Naive thymus-derived CD4-positive, alpha-beta T cell (primary cell): ENCODE measurements at regions of chr11 and their contacts with region 1.

Region 1: GRCh38 chr11:119030329-119031049 is at the start of gene SLC37A4:
- DNase-seq: peak; percentile 96 to 100 (median 98)
- ATAC-seq: peak; percentile 97
- H3K4me3 ChIP-seq: peak within 1 kb of the TSS; percentile 91
- H3K4me3 Mint-ChIP-seq: peak within 1 kb of the TSS; percentile 62 to 93 (median 82)
- H3K27ac ChIP-seq: peak within 1 kb of the TSS; percentile 79
- H3K27ac Mint-ChIP-seq: peak within 1 kb of the TSS; percentile 59 to 93 (median 81)
- H3K4me1 ChIP-seq: peaks cover 0 to 10% of the 10 kb centered on the region in 2 donors
- H3K4me1 Mint-ChIP-seq: peaks cover 12 to 24% (median 17%) of the 10 kb centered on the region in 7 donors
- H3K27me3 ChIP-seq: no peaks in the 10 kb centered on the region
- H3K27me3 Mint-ChIP-seq: no peaks in the 10 kb centered on the region
- total RNA-seq, gene SLC37A4: 7.1 to 20.8 (median 14.6) TPM

Region 2: GRCh38 chr11:118997627-118998387 is 32.7 kb before region 1 on chr11 and contains the start of gene CENATAC:
- CTCF ChIA-PET with region 1: no interaction called
- POLR2A ChIA-PET with region 1: interaction called, 16 read pairs
- intact Hi-C with region 1: loop called (anchors 1 kb)
- DNase-seq: peak; percentile 91 to 98 (median 94)
- ATAC-seq: peak; percentile 98
- H3K4me3 ChIP-seq: peak within 1 kb of the TSS; percentile 91
- H3K4me3 Mint-ChIP-seq: peak within 1 kb of the TSS; percentile 87 to 99 (median 94)
- H3K27ac ChIP-seq: peak within 1 kb of the TSS; percentile 85
- H3K27ac Mint-ChIP-seq: peak within 1 kb of the TSS; percentile 87 to 98 (median 92)
- H3K4me1 ChIP-seq: peaks cover 6 to 16% of the 10 kb centered on the region in 2 donors
- H3K4me1 Mint-ChIP-seq: peaks cover 26 to 45% (median 37%) of the 10 kb centered on the region in 7 donors
- H3K27me3 ChIP-seq: no peaks in the 10 kb centered on the region
- H3K27me3 Mint-ChIP-seq: no peaks in the 10 kb centered on the region
- total RNA-seq, gene CENATAC: 53.5 to 136 (median 109) TPM

Region 3: GRCh38 chr11:119084663-119085436 is 54.4 kb after region 1 on chr11 and contains the start of gene HMBS:
- CTCF ChIA-PET with region 1: no interaction called
- POLR2A ChIA-PET with region 1: interaction called, 3 read pairs
- intact Hi-C with region 1: loop called (anchors 1 to 2 kb)
- DNase-seq: peak; percentile 83 to 93 (median 87)
- ATAC-seq: peak; percentile 97
- H3K4me3 ChIP-seq: peak within 1 kb of the TSS; percentile 81
- H3K4me3 Mint-ChIP-seq: peak within 1 kb of the TSS; percentile 85 to 98 (median 94)
- H3K27ac ChIP-seq: peak within 1 kb of the TSS; percentile 81
- H3K27ac Mint-ChIP-seq: peak within 1 kb of the TSS; percentile 87 to 97 (median 93)
- H3K4me1 ChIP-seq: peaks cover 8 to 9% of the 10 kb centered on the region in 2 donors
- H3K4me1 Mint-ChIP-seq: peaks cover 7 to 39% (median 17%) of the 10 kb centered on the region in 7 donors
- H3K27me3 ChIP-seq: no peaks in the 10 kb centered on the region
- H3K27me3 Mint-ChIP-seq: no peaks in the 10 kb centered on the region
- total RNA-seq, gene HMBS: 6.7 to 25.4 (median 7.7) TPM

Region 4: DNA sequence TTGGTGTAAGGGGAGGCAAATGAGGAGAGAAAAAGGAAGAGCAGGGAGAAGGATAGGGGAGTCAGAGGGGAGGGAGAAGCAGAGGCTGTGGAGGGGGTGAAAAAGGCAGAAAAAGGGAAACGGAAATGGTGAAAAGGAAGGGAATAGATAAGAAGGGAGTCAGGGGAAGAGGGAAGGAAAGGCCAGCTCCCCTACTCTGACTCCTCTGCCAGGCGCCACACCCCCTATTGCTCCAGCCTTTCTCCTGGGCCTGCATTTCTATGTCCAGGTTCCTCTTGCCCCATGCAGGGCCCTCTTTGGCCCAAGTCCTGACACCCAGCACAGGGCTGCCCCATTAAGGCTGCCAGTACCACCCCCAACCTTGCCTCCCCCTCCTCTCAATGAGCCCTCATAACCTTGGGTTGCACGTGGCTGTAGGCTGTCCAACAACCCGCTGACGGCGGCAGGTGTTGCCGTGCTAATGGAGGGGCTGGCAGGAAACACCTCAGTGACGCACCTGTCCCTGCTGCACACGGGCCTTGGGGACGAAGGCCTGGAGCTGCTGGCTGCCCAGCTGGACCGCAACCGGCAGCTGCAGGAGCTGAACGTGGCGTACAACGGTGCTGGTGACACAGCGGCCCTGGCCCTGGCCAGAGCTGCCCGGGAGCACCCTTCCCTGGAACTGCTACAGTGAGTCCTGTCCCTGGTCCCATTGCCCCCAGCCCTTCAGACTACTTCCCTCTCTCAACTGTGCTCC is 151.4 kb after region 1 on chr11:
- CTCF ChIA-PET with region 1: no interaction called
- POLR2A ChIA-PET with region 1: no interaction called
- intact Hi-C with region 1: no loop called
- DNase-seq: no peak
- ATAC-seq: no peak
- H3K4me3 ChIP-seq: no peak overlapping the region
- H3K4me3 Mint-ChIP-seq: no peak overlapping the region
- H3K27ac ChIP-seq: no peak overlapping the region
- H3K27ac Mint-ChIP-seq: peak overlapping the region in 3 of 9 donors; percentile 13 to 70 (median 38)
- H3K4me1 ChIP-seq: peaks cover 0 to 14% of the 10 kb centered on the region in 2 donors
- H3K4me1 Mint-ChIP-seq: peaks cover 9 to 18% (median 13%) of the 10 kb centered on the region in 7 donors
- H3K27me3 ChIP-seq: no peaks in the 10 kb centered on the region
- H3K27me3 Mint-ChIP-seq: no peaks in the 10 kb centered on the region

Region 5: GRCh38 chr11:119352857-119353260 is 322.4 kb after region 1 on chr11:
- CTCF ChIA-PET with region 1: no interaction called
- POLR2A ChIA-PET with region 1: no interaction called
- intact Hi-C with region 1: no loop called
- DNase-seq: no peak
- ATAC-seq: no peak
- H3K4me3 ChIP-seq: no peak overlapping the region
- H3K4me3 Mint-ChIP-seq: no peak overlapping the region
- H3K27ac ChIP-seq: no peak overlapping the region
- H3K27ac Mint-ChIP-seq: no peak overlapping the region
- H3K4me1 ChIP-seq: no peaks in the 10 kb centered on the region
- H3K4me1 Mint-ChIP-seq: peaks cover 0 to 18% (median 5%) of the 10 kb centered on the region in 7 donors
- H3K27me3 ChIP-seq: no peaks in the 10 kb centered on the region
- H3K27me3 Mint-ChIP-seq: peaks cover 16 to 57% (median 36%) of the 10 kb centered on the region in 5 donors